ENCODE measurements at regions of chr5 and their contacts with region 1.

Region 1: DNA sequence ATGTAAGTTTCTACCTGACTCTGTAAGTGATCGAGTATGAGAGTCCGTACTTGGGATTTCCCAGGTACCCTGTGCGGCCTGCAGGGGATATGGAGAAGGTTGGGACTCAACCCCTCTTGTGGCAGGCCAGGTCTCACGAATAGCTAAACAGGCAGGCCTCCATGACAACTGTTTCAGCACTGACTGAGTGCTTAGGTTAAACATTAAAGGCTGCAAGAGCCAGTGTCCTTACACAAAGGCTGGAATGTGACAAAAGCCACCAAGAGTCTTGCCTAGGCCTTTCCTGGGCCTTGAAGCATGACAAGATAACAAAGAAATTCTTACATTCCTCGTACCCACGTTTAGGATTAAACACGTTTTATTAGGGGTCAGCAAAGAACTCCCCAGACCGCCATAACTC is 58.6 kb downstream of the THBS4 start:
- DNase-seq: no peak
- ATAC-seq: 0 out of 2 replicates have a peak, but pooled peaks have one; percentile 30
- H3K4me3 ChIP-seq: no peak overlapping the region
- H3K27ac ChIP-seq: no peak overlapping the region
- H3K4me1 ChIP-seq: peaks cover 0 to 4% of the 10 kb centered on the region in 2 experiments; a peak in 1 of 4 replicates
- H3K27me3 ChIP-seq: no peaks in the 10 kb centered on the region
- CTCF ChIP-seq: no peak; a peak in 1 of 6 replicates
- POLR2A ChIP-seq: no peak
- RAD21 ChIP-seq: no peak

Region 2: GRCh38 chr5:80083101-80083890 is 10.5 kb before region 1 on chr5:
- CTCF ChIA-PET with region 1: interaction called, 10 read pairs
- POLR2A ChIA-PET with region 1: no interaction called
- RAD21 ChIA-PET with region 1: no interaction called
- intact Hi-C with region 1: no loop called
- DNase-seq: peak; percentile 71
- ATAC-seq: peak; percentile 82
- H3K4me3 ChIP-seq: peak overlapping the region in 1 of 2 experiments; percentile 23; a peak in 2 of 4 replicates
- H3K27ac ChIP-seq: no peak overlapping the region
- H3K4me1 ChIP-seq: peaks cover 6 to 18% of the 10 kb centered on the region in 2 experiments; a peak in 2 of 4 replicates
- H3K27me3 ChIP-seq: no peaks in the 10 kb centered on the region
- CTCF ChIP-seq: peak; percentile 63 to 86 (median 78)
- POLR2A ChIP-seq: no peak
- RAD21 ChIP-seq: peak; percentile 90

Region 3: DNA sequence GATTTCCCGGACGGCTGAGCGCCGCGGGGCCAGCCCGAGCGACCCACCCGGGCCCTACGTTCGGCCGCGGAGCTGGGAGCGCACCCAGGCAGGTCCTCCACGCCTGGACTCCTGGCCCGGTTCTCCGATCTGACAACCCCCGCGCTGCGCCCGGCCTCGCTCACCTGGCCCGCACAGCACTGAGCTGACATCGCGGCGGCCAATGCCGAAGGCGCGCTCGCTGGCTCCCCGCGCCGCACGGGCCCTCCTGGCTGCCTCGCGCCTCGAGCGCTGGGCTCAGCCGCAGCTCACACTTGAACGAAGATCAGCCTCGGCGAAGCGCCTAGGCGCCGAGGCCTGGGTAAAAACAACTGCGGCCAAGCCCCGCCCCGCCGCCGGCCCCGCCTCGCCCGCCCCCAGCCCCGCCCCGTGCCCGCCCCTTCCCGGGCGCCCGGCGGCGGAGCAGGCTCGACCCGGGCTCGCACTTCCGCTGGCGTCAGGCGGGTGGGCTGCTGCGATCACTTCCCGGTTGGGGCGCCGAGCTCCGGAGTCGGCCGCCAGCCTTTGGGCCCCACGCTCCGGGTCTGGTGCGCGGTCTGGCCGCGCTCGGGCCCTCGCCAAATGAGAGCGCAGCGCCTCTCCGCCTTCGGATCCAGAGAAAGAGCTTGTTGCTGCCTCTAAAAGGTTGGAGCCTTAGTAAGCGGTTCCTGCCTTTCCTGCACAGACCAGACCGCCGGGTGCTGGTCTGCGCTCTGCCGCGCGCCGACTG is 162.1 kb after region 1 on chr5 and contains the start of gene SERINC5:
- CTCF ChIA-PET with region 1: interaction called, 13 read pairs
- POLR2A ChIA-PET with region 1: interaction called, 4 read pairs
- RAD21 ChIA-PET with region 1: no interaction called
- intact Hi-C with region 1: loop called (anchors 5 kb)
- DNase-seq: peak; percentile 43
- ATAC-seq: peak; percentile 81
- H3K4me3 ChIP-seq: peak within 1 kb of the TSS; percentile 81 to 91
- H3K27ac ChIP-seq: peak within 1 kb of the TSS; percentile 88
- H3K4me1 ChIP-seq: peaks cover 13 to 39% of the 10 kb centered on the region in 2 experiments
- H3K27me3 ChIP-seq: no peaks in the 10 kb centered on the region
- CTCF ChIP-seq: no peak
- POLR2A ChIP-seq: peak; percentile 60
- RAD21 ChIP-seq: 0 out of 2 replicates have a peak, but pooled peaks have one; percentile 1
- total RNA-seq, gene SERINC5: 39.3 TPM

Region 4: DNA sequence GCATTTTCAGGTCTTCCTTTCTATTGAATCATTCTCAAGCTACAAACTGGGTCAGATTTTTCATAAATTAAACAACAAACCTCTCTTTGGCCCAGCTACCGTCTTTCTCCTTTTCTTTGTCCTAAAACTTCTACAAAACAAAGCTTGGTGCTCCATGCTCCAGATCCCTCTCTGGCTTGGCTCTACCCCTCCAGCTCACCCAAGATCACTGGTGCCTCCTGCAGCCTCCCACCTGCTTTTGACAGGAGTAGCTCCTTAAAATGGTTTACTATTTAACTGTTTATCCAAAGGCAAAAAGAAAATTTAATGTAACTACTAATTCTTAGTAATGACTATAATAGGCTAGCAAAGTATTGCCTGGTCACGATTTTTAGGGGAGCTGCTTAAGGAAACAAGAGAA is 172.8 kb after region 1 on chr5:
- CTCF ChIA-PET with region 1: interaction called, 10 read pairs
- POLR2A ChIA-PET with region 1: no interaction called
- RAD21 ChIA-PET with region 1: interaction called in 1 of 2 experiments, 3 read pairs
- intact Hi-C with region 1: no loop called
- DNase-seq: no peak
- ATAC-seq: no peak
- H3K4me3 ChIP-seq: no peak overlapping the region
- H3K27ac ChIP-seq: no peak overlapping the region
- H3K4me1 ChIP-seq: peaks cover 3 to 16% of the 10 kb centered on the region in 2 experiments; a peak in 3 of 4 replicates
- H3K27me3 ChIP-seq: no peaks in the 10 kb centered on the region
- CTCF ChIP-seq: 0 out of 6 replicates have a peak, but pooled peaks of 1 of the 3 experiments have one; percentile 5
- POLR2A ChIP-seq: no peak
- RAD21 ChIP-seq: peak; percentile 43; the same call in 1 of the 2 replicates

Region 5: GRCh38 chr5:80275347-80275746 is 181.6 kb after region 1 on chr5:
- CTCF ChIA-PET with region 1: interaction called, 16 read pairs
- POLR2A ChIA-PET with region 1: no interaction called
- RAD21 ChIA-PET with region 1: interaction called, 3 to 4 read pairs
- intact Hi-C with region 1: loop called (anchors 1 kb)
- DNase-seq: no peak
- ATAC-seq: peak; percentile 74
- H3K4me3 ChIP-seq: no peak overlapping the region
- H3K27ac ChIP-seq: no peak overlapping the region
- H3K4me1 ChIP-seq: no peaks in the 10 kb centered on the region
- H3K27me3 ChIP-seq: no peaks in the 10 kb centered on the region
- CTCF ChIP-seq: peak; percentile 58 to 79 (median 66)
- POLR2A ChIP-seq: no peak
- RAD21 ChIP-seq: peak; percentile 92

Region 6: DNA sequence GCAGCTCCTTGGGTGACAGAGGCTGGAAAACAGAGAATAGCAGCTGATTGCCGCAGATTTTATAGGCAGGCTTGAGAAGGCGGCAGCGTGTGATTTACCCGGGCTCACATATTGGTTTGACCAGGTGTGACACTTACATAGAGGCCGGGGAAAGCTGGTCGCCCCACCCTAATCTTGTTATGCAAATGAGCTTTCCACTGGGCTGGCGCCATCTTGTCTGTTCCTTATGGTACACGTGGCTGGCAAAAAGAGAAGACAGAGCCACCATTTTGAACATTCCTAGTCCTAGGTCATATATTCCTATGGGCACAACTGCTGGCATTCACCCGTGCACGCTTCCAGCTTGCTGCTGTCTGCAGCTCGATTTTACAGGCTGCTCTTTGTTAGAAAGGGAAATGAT is 214.7 kb after region 1 on chr5:
- CTCF ChIA-PET with region 1: interaction called, 101 read pairs
- POLR2A ChIA-PET with region 1: interaction called, 3 read pairs
- RAD21 ChIA-PET with region 1: interaction called, 24 to 25 read pairs
- intact Hi-C with region 1: loop called (anchors 1 kb)
- DNase-seq: no peak
- ATAC-seq: no peak
- H3K4me3 ChIP-seq: no peak overlapping the region
- H3K27ac ChIP-seq: no peak overlapping the region
- H3K4me1 ChIP-seq: no peaks in the 10 kb centered on the region
- H3K27me3 ChIP-seq: no peaks in the 10 kb centered on the region
- CTCF ChIP-seq: no peak
- POLR2A ChIP-seq: no peak
- RAD21 ChIP-seq: no peak

Region 7: GRCh38 chr5:80672140-80672736 is 578.4 kb after region 1 on chr5:
- CTCF ChIA-PET with region 1: interaction called, 6 read pairs
- POLR2A ChIA-PET with region 1: no interaction called
- RAD21 ChIA-PET with region 1: no interaction called
- intact Hi-C with region 1: loop called (anchors 2 kb)
- DNase-seq: peak; percentile 54
- ATAC-seq: peak; percentile 90
- H3K4me3 ChIP-seq: no peak overlapping the region
- H3K27ac ChIP-seq: no peak overlapping the region
- H3K4me1 ChIP-seq: no peaks in the 10 kb centered on the region
- H3K27me3 ChIP-seq: no peaks in the 10 kb centered on the region
- CTCF ChIP-seq: peak; percentile 74 to 77 (median 76); a peak in 5 of 6 replicates
- POLR2A ChIP-seq: no peak
- RAD21 ChIP-seq: peak; percentile 80